ENCODE measurements at regions of chr9 and their contacts with region 1.

Region 1: GRCh38 chr9:22008736-22009562 is at the start of gene CDKN2B:
- DNase-seq: peak; percentile 96
- H3K4me3 Mint-ChIP-seq: peak within 1 kb of the TSS; percentile 96
- H3K27ac Mint-ChIP-seq: peak within 1 kb of the TSS; percentile 53
- H3K4me1 Mint-ChIP-seq: peaks cover 16% of the 10 kb centered on the region
- H3K27me3 Mint-ChIP-seq: no peaks in the 10 kb centered on the region
- CTCF ChIP-seq: peak; percentile 91
- total RNA-seq, gene CDKN2B: 30.4 and 35.2 TPM in 2 replicates

Region 2: GRCh38 chr9:21985964-21986667 is 22.8 kb before region 1 on chr9:
- CTCF ChIA-PET with region 1: no interaction called
- intact Hi-C with region 1: no loop called
- DNase-seq: no peak
- H3K4me3 Mint-ChIP-seq: peak overlapping the region; percentile 81
- H3K27ac Mint-ChIP-seq: peak overlapping the region; percentile 89
- H3K4me1 Mint-ChIP-seq: peaks cover 20% of the 10 kb centered on the region
- H3K27me3 Mint-ChIP-seq: no peaks in the 10 kb centered on the region
- CTCF ChIP-seq: no peak

Region 3: GRCh38 chr9:22119537-22120158 is 110.7 kb after region 1 on chr9:
- CTCF ChIA-PET with region 1: interaction called, 16 read pairs
- intact Hi-C with region 1: no loop called
- DNase-seq: peak; percentile 21
- H3K4me3 Mint-ChIP-seq: no peak overlapping the region
- H3K27ac Mint-ChIP-seq: peak overlapping the region; percentile 93
- H3K4me1 Mint-ChIP-seq: peaks cover 61% of the 10 kb centered on the region
- H3K27me3 Mint-ChIP-seq: no peaks in the 10 kb centered on the region
- CTCF ChIP-seq: no peak